ENCODE measurements at regions of chr18 and their contacts with region 1.

Region 1: GRCh38 chr18:11310476-11311086 is 161.2 kb upstream of the PIEZO2 start:
- DNase-seq: peak in 1 of 2 experiments; percentile 83
- H3K4me3 ChIP-seq: no peak overlapping the region
- H3K27ac ChIP-seq: no peak overlapping the region
- H3K4me1 ChIP-seq: no peaks in the 10 kb centered on the region
- H3K27me3 ChIP-seq: no peaks in the 10 kb centered on the region
- CTCF ChIP-seq: peak; percentile 81 to 90 (median 90)
- EP300 ChIP-seq: no peak
- POLR2A ChIP-seq: no peak
- RAD21 ChIP-seq: peak; percentile 72 to 77

Region 2: DNA sequence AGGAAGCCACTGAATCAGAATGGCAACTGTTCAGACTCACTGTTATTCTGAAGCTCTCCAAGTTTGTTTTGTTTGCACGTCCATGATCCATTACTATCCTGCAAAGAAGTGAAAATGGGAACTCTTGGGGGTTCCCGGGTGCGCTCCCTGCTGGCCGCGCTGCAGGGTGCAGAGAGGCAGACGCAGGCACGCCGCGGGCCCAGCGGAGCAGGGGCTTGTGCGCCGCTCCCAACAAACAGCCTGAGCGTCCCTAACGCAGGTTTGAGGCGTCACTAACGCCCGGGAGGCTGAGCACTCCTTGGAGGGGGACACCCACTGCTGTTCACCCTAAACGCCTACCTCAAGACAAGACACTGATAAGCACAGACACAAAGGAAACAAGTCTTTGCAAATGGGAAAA is 146.9 kb before region 1 on chr18:
- CTCF ChIA-PET with region 1: interaction called, 10 read pairs
- POLR2A ChIA-PET with region 1: no interaction called
- DNase-seq: peak in 1 of 2 experiments; percentile 69
- H3K4me3 ChIP-seq: peak overlapping the region in 1 of 4 experiments; percentile 24; a peak in 1 of 8 replicates
- H3K27ac ChIP-seq: no peak overlapping the region
- H3K4me1 ChIP-seq: peaks cover 0 to 2% (median 1%) of the 10 kb centered on the region in 4 experiments; a peak in 4 of 7 replicates
- H3K27me3 ChIP-seq: peaks cover 0 to 19% (median 11%) of the 10 kb centered on the region in 4 experiments; a peak in 5 of 7 replicates
- CTCF ChIP-seq: peak; percentile 44 to 59 (median 57)
- EP300 ChIP-seq: no peak
- POLR2A ChIP-seq: no peak
- RAD21 ChIP-seq: peak; percentile 40 to 47

Region 3: GRCh38 chr18:11379660-11380059 is 69.1 kb after region 1 on chr18:
- CTCF ChIA-PET with region 1: interaction called, 11 read pairs
- POLR2A ChIA-PET with region 1: no interaction called
- DNase-seq: no peak
- H3K4me3 ChIP-seq: no peak overlapping the region
- H3K27ac ChIP-seq: no peak overlapping the region
- H3K4me1 ChIP-seq: no peaks in the 10 kb centered on the region
- H3K27me3 ChIP-seq: no peaks in the 10 kb centered on the region
- CTCF ChIP-seq: peak in 2 of 3 experiments; percentile 27 to 55; a peak in 2 of 4 replicates
- EP300 ChIP-seq: no peak
- POLR2A ChIP-seq: no peak
- RAD21 ChIP-seq: 0 out of 4 replicates have a peak, but pooled peaks have one; percentile 15 to 22

Region 4: GRCh38 chr18:11512096-11513030 is 201.8 kb after region 1 on chr18:
- CTCF ChIA-PET with region 1: interaction called, 10 read pairs
- POLR2A ChIA-PET with region 1: no interaction called
- DNase-seq: no peak
- H3K4me3 ChIP-seq: no peak overlapping the region
- H3K27ac ChIP-seq: no peak overlapping the region
- H3K4me1 ChIP-seq: no peaks in the 10 kb centered on the region
- H3K27me3 ChIP-seq: no peaks in the 10 kb centered on the region
- CTCF ChIP-seq: peak; percentile 33 to 52 (median 47)
- EP300 ChIP-seq: no peak
- POLR2A ChIP-seq: no peak
- RAD21 ChIP-seq: peak; percentile 71 to 78

Region 5: DNA sequence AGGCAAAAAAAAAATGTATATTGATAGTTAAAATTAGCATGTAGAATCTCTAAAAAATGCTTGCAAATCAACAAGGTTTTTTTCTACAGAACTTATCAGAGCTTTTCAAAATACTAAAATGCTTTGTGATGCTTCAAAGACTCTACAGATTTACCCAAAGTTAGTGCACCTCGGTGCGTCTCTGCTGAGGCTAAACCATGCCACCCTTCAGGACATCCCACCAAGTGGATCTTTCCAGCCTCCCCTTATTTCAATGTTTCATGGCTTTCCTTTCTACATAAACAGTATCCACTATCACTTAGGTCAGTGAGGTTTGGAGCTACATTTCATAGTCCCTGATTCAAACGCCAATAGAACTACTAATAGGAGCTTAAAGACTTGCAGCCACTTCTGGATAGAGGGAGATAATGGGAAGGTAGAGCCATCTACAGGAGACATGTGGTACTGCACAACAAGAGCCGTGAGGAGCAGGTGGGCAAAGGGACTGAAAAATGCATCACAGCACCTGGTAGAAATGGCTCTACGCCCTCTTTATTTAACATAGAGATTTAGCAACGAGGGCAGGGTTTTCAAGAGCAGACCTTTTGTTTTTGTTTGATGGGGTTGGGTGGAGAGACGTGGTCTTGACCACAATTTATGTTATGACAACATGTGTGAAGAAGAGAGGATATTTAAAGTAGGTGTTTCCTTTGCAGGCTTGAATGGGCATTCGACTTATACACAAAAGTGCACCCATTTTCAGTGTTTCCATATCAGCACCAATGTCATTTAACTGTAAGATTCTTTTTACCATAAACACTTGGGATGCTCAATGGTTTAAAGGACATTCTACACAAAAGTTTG is 242.7 kb after region 1 on chr18:
- CTCF ChIA-PET with region 1: interaction called, 49 read pairs
- POLR2A ChIA-PET with region 1: no interaction called
- DNase-seq: peak; percentile 15 to 78
- H3K4me3 ChIP-seq: no peak overlapping the region
- H3K27ac ChIP-seq: no peak overlapping the region
- H3K4me1 ChIP-seq: no peaks in the 10 kb centered on the region
- H3K27me3 ChIP-seq: no peaks in the 10 kb centered on the region
- CTCF ChIP-seq: peak; percentile 56 to 91 (median 73)
- EP300 ChIP-seq: no peak
- POLR2A ChIP-seq: no peak
- RAD21 ChIP-seq: peak; percentile 89 to 90